CD14-positive monocyte (primary cell): ENCODE measurements at regions of chr2 and their contacts with region 1.

Region 1: DNA sequence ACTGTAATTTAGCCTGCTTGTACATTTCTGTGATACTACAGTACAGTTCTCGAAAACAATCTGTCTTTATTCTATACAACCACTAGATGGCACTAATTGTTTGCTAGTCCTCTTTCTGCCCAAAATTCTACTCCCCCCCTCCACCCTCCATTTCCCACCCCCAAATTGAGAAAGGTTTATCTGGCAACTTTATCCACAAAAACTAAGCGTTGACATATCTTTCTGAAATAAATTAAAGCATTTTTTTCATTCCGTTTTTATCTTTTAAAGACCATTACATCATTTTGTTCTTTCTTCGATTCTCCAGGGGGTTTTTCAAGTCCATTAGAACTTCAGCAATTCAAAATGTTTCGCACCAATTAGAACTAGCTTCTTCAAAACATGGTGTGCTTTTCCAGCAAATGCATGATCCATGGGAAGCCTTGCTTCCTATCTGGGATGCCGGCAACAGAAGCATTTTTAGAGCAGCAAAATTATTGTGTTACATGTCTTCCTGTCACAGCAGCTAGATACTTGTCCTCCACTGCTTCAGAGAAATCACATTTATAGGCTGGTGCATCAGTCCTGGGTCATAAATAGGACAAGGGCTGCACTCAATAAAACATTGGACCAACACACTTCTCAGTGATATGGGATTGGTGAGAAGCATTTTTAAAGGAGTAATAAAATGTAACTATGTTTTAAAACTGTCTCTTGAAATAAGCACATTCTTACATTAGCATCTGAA is 241.3 kb downstream of the PAX3 start:
- DNase-seq: peak in 1 of 3 donors; percentile 11
- H3K4me3 ChIP-seq: no peak overlapping the region
- H3K4me3 Mint-ChIP-seq: no peak overlapping the region
- H3K27ac ChIP-seq: no peak overlapping the region
- H3K27ac Mint-ChIP-seq: no peak overlapping the region
- H3K4me1 ChIP-seq: no peaks in the 10 kb centered on the region
- H3K4me1 Mint-ChIP-seq: no peaks in the 10 kb centered on the region
- H3K27me3 ChIP-seq: peaks cover 17 to 22% of the 10 kb centered on the region in 2 donors
- H3K27me3 Mint-ChIP-seq: peaks cover 11 to 28% (median 17%) of the 10 kb centered on the region in 3 donors
- CTCF ChIP-seq: peak; percentile 70

Region 2: DNA sequence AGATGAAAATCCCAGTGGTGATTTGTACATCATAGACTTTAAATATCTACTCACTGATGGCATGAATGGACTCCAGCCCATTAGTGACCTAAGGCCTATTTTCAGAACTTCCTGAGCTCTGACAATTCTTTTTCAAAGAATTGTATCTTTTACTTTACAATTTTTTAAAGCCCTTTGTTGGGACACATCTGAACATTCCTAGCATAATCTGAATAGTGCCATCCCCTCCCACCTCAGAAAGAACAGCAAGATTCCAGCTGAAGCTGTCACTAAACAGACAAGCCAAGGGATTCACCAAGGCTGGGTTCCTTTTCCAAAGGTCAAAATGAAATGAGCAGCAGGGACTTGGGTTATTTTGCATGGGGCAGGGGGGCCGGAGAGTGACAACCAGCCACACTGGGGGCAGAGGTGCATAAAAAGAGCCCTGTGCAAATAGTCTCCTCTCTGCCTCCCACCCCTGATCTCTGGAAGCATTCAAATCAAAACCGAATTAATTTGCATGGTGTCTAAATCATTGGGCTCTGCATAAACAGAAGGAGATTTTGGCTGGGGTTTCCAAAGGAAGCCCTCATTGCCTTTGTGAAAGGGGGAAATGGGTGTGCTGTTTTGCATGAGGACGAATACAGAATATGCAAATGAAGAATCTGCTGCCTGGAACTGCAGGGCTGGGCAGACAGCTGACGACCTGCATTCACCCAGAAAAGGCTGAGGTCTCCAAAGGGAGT is 502.6 kb before region 1 on chr2:
- intact Hi-C with region 1: no loop called
- DNase-seq: no peak
- H3K4me3 ChIP-seq: no peak overlapping the region
- H3K4me3 Mint-ChIP-seq: no peak overlapping the region
- H3K27ac ChIP-seq: no peak overlapping the region
- H3K27ac Mint-ChIP-seq: no peak overlapping the region
- H3K4me1 ChIP-seq: no peaks in the 10 kb centered on the region
- H3K4me1 Mint-ChIP-seq: no peaks in the 10 kb centered on the region
- H3K27me3 ChIP-seq: no peaks in the 10 kb centered on the region
- H3K27me3 Mint-ChIP-seq: peaks cover 0 to 4% (median 0%) of the 10 kb centered on the region in 3 donors
- CTCF ChIP-seq: no peak

Region 3: GRCh38 chr2:222561817-222562645 is 504.5 kb after region 1 on chr2:
- intact Hi-C with region 1: loop called in 1 of 2 experiments (anchors 10 kb)
- DNase-seq: peak; percentile 23 to 43 (median 35)
- H3K4me3 ChIP-seq: no peak overlapping the region
- H3K4me3 Mint-ChIP-seq: no peak overlapping the region
- H3K27ac ChIP-seq: no peak overlapping the region
- H3K27ac Mint-ChIP-seq: peak overlapping the region in 1 of 7 donors; percentile 14
- H3K4me1 ChIP-seq: no peaks in the 10 kb centered on the region
- H3K4me1 Mint-ChIP-seq: peaks cover 2% of the 10 kb centered on the region
- H3K27me3 ChIP-seq: no peaks in the 10 kb centered on the region
- H3K27me3 Mint-ChIP-seq: peaks cover 2 to 8% (median 5%) of the 10 kb centered on the region in 3 donors
- CTCF ChIP-seq: peak; percentile 64